Activated T-helper 2 cell treated with anti-CD3 and anti-CD28 coated beads, Interferon-gamma antibody, Interleukin-2, Interleukin-4, amounts not matched to agents 10 μg/mL and 5 μg/mL and 100 μg/mL, durations not matched to agents 14 hours and 24 hours and 36 hours (primary cell): ENCODE measurements at regions of chr3 and their contacts with region 1.

Region 1: DNA sequence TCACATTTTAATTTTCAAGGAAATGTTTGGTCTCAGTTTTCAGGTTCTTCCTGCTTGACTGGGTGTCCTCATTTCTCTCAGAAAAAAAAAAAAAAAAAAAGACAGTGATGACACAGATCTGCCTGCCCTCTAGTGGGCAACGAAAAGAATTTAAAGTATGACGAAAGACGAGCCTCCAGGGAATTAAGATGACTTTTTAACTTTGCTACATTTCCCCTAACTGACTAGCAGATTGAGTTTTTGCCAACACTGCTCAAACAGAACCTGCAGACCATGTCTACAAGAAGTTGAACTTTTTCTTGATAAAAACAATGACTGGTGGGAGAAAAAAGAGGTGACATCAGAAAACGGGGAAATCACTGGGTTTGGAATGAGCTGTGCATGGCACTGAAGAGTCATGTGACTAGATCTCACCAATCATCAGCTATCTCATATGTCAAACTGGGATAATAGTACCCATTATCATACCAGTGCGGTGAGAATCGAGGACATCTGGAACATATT is 40.8 kb downstream of the EOMES start:
- DNase-seq: no peak
- H3K4me3 Mint-ChIP-seq: peak overlapping the region; percentile 62
- H3K27ac Mint-ChIP-seq: peak overlapping the region; percentile 64
- H3K4me1 Mint-ChIP-seq: peaks cover 10% of the 10 kb centered on the region
- H3K27me3 Mint-ChIP-seq: peaks cover 5% of the 10 kb centered on the region

Region 2: GRCh38 chr3:27134165-27134796 is 547.0 kb before region 1 on chr3:
- intact Hi-C with region 1: loop called (anchors 1 kb)
- DNase-seq: peak; percentile 30
- H3K4me3 Mint-ChIP-seq: no peak overlapping the region
- H3K27ac Mint-ChIP-seq: no peak overlapping the region
- H3K4me1 Mint-ChIP-seq: no peaks in the 10 kb centered on the region
- H3K27me3 Mint-ChIP-seq: no peaks in the 10 kb centered on the region

Region 3: GRCh38 chr3:27312044-27312668 is 369.1 kb before region 1 on chr3:
- intact Hi-C with region 1: loop called (anchors 1 kb)
- DNase-seq: no peak
- H3K4me3 Mint-ChIP-seq: no peak overlapping the region
- H3K27ac Mint-ChIP-seq: no peak overlapping the region
- H3K4me1 Mint-ChIP-seq: no peaks in the 10 kb centered on the region
- H3K27me3 Mint-ChIP-seq: peaks cover 15% of the 10 kb centered on the region

Region 4: DNA sequence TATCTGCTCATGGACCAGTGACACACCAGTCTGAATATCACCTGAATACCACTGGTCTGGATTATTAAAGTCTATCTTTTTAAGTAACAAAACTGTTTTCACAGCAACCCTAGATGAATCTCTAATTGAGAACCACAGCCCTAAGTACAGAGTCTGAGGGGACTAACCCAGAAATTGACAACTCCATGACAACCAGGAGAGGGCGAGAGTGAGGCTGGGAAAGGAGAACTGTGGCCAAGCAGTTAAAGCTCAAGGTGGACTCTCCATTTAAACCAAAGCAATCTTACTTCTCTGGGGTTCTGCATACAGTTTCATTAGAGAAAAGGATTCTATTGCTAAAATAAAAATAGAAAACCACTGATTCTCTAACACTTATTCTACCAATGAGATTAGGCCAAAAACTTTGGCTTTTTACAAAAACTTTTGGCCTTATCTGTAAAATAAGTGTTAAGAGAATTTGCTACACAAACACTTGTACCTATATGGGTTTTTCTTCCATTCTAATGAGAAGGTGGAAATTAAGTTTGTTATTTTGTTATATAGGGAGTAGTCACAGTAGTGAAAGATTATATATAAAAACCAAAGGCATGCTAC is 323.5 kb before region 1 on chr3:
- intact Hi-C with region 1: loop called (anchors 1 kb)
- DNase-seq: peak; percentile 39
- H3K4me3 Mint-ChIP-seq: no peak overlapping the region
- H3K27ac Mint-ChIP-seq: no peak overlapping the region
- H3K4me1 Mint-ChIP-seq: peaks cover 35% of the 10 kb centered on the region
- H3K27me3 Mint-ChIP-seq: peaks cover 2% of the 10 kb centered on the region

Region 5: DNA sequence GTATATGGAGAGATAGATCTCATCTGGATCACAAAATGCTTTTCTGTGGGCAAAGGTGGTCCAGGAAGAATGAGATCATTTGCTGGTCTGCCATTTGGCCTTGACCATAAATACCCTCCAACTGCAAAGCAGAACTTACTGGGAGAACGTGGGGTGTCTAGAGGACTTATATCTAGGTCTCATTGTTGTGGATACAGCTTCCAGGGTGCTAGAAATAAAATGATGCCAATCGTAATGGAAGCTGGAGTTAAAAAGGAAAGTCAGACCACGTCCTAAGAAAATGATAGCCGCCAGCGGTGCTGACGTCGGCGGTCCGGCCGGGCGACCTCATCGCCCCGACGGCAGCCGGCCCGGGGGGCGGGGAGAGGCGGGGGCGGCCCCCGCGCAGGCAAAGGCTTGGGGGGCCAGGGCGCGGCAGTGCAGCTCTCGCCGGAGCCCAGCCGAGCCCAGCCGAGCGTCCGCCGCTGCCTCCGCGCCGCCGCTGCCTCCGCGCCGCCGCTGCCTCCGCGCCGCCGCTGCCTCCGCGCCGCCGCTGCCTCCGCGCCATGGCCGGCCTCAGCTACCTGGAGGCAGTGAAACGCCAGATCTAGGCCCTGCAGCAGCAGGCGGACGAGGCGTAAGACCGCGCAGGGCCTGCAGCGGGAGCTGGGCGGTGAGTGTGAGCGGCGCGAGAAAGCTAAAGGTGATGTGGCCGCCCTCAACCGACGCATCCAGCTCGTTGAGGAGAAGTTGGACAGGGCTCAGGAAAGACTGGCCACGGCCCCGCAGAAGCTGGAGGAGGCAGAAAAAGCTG is 48.7 kb before region 1 on chr3:
- intact Hi-C with region 1: loop called (anchors 5 kb)
- DNase-seq: peak; percentile 34
- H3K4me3 Mint-ChIP-seq: peak overlapping the region; percentile 93
- H3K27ac Mint-ChIP-seq: peak overlapping the region; percentile 90
- H3K4me1 Mint-ChIP-seq: peaks cover 44% of the 10 kb centered on the region
- H3K27me3 Mint-ChIP-seq: no peaks in the 10 kb centered on the region

Region 6: DNA sequence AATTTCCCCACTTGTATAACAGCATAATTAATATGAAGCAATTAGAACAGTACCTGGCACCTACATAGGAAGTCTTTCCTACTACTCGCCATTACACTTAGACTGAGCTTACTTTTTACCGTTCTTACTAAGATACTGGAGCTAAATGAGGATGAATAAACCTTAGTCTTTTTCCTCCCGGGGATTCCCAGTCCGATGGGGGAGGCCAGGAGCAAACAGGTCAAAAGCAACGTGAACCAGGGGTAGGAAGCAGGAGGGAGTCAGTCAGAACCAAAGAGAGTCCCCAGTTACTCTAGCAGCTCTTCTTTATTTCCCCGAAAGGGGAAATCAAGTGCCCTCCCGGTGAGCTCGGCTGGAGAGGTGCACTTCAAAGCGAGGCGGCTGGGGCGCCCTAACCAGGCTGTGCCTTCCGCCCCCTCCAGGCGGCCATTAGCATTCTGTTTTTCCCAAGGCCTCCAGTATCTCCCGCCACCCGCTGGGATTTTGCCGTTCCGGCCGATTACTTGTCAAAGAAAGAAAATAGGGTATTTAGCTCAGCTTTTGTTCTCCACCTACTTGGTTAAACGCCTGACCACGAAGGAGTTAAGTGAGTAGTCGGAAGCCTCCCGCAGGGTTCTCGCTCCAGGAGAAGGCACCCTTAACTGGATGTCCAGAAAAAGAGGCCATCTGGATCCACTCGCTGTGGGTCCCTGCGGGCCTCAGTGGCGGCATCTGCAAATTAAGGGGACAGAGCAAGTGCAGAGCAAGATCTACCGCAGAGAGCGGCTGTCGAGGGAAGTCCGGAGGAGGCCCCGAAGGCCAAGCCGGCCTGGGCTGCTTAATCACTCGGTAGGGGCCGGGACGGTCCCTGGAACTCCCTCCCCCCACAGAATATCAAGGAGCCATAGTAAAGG is 47.1 kb after region 1 on chr3:
- intact Hi-C with region 1: no loop called
- DNase-seq: no peak
- H3K4me3 Mint-ChIP-seq: peak overlapping the region; percentile 64
- H3K27ac Mint-ChIP-seq: no peak overlapping the region
- H3K4me1 Mint-ChIP-seq: peaks cover 45% of the 10 kb centered on the region
- H3K27me3 Mint-ChIP-seq: peaks cover 87% of the 10 kb centered on the region